HepG2 (cell line): ENCODE measurements at regions of chr19 and their contacts with region 1.

Region 1: GRCh38 chr19:11380653-11381534 is 3.2 kb downstream of the EPOR start:
- DNase-seq: peak; percentile 98
- ATAC-seq: peak; percentile 82
- H3K4me3 ChIP-seq: peak overlapping the region; percentile 40 to 71 (median 63)
- H3K27ac ChIP-seq: peak overlapping the region; percentile 52
- H3K4me1 ChIP-seq: peaks cover 49% of the 10 kb centered on the region
- H3K27me3 ChIP-seq: no peaks in the 10 kb centered on the region
- CTCF ChIP-seq: peak; percentile 95
- EP300 ChIP-seq: no peak; a peak in 1 of 4 replicates
- POLR2A ChIP-seq: peak; percentile 63 to 85
- RAD21 ChIP-seq: peak; percentile 94

Region 2: DNA sequence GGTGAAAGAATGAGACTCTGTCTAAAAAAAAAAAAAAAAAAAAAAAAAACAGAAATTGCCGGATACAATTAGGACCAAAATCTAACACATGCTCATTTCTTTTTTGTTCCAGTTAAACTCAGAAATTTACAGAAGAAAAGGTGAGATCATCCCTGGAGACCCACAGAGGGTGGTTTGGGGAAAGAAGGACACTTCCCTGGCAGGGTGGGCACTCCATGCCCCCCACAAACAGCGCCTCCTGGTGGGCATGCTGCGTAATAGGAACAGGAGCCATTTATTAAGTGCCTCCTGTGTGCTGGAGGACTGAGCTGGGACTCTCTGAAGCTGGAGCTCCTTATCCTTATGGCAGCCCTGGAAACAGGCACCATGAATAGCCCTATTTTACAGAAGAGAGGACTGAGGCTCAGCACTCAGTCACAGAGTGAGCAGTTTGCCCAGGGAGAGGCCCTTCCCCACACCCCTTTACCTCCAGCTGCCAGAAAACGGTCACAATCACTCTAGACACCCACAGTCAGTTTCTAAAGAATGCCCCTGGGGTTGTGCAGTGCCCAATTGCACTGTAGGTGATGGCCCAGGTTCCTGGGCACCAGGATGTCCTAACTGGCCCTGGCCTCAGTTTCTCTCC is 522.6 kb before region 1 on chr19:
- CTCF ChIA-PET with region 1: no interaction called
- POLR2A ChIA-PET with region 1: no interaction called
- in situ Hi-C with region 1: no loop called
- intact Hi-C with region 1: no loop called
- DNase-seq: no peak
- ATAC-seq: peak; percentile 22; the same call in 1 of the 3 replicates
- H3K4me3 ChIP-seq: no peak overlapping the region
- H3K27ac ChIP-seq: no peak overlapping the region
- H3K4me1 ChIP-seq: peaks cover 30% of the 10 kb centered on the region
- H3K27me3 ChIP-seq: no peaks in the 10 kb centered on the region
- CTCF ChIP-seq: peak; percentile 75
- EP300 ChIP-seq: no peak
- POLR2A ChIP-seq: no peak
- RAD21 ChIP-seq: no peak

Region 3: DNA sequence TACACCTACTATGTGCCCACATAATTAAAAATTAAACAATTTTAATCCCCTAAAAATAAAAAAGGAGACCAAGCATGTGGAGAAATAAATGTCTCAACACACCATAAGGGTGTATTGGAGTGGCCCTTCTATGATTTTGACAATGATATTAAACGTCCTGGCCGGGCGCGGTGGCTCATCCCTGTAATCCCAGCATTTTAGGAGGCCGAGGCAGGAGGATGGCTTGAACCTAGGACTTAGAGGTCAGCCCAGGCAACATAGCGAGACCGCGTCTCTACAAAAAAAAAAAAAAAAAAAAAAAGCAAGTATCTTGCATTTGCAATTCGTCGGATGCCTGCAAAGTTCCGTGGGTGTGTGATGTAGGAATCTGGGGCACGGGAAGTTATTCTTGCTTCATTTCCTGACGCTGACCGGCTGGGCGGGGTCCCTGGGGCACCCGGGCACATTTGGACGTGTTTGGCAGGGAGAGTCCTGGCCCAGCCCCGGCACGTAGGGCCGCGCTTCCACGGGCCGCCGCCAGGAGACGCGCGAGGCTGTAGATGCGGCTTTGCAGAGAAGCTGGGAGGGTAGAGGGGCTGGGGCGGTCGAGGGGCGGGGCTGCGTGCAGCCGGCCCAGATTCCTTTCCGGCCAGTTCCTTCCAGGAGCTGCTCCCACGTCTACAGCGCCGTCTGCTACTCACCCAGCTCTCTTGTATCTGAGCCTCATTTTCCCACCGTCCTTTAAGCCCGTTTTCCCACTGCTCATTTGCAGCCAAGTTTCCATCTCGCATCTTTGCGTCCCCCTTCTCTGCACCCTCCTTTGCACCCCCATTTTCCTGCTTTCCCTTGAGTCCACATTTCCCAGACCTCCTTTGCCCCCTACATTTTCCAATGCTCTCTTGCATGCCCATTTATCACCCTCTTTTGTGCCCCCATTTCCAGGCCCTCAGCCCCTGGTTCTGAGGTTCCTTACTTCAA is 87.2 kb before region 1 on chr19:
- CTCF ChIA-PET with region 1: interaction called, 8 read pairs
- POLR2A ChIA-PET with region 1: interaction called, 3 read pairs
- in situ Hi-C with region 1: no loop called
- intact Hi-C with region 1: loop called (anchors 2 kb)
- DNase-seq: peak; percentile 78
- ATAC-seq: peak; percentile 96
- H3K4me3 ChIP-seq: peak overlapping the region in 1 of 3 experiments; percentile 56; a peak in 2 of 6 replicates
- H3K27ac ChIP-seq: no peak overlapping the region
- H3K4me1 ChIP-seq: peaks cover 43% of the 10 kb centered on the region
- H3K27me3 ChIP-seq: peaks cover 3 to 13% of the 10 kb centered on the region in 2 experiments; a peak in 4 of 5 replicates
- CTCF ChIP-seq: peak; percentile 98
- EP300 ChIP-seq: 0 out of 4 replicates have a peak, but pooled peaks of 1 of the 2 experiments have one; percentile 3
- POLR2A ChIP-seq: no peak
- RAD21 ChIP-seq: peak; percentile 96

Region 4: GRCh38 chr19:11422163-11423021 is 41.5 kb after region 1 on chr19:
- CTCF ChIA-PET with region 1: no interaction called
- POLR2A ChIA-PET with region 1: interaction called, 9 read pairs
- in situ Hi-C with region 1: loop called (anchors 5 kb)
- intact Hi-C with region 1: loop called (anchors 5 kb)
- DNase-seq: no peak
- ATAC-seq: no peak
- H3K4me3 ChIP-seq: peak overlapping the region in 2 of 3 experiments; percentile 24 to 69; a peak in 2 of 6 replicates
- H3K27ac ChIP-seq: no peak overlapping the region
- H3K4me1 ChIP-seq: peaks cover 51% of the 10 kb centered on the region
- H3K27me3 ChIP-seq: peaks cover 3 to 35% of the 10 kb centered on the region in 2 experiments; a peak in 4 of 5 replicates
- CTCF ChIP-seq: no peak
- EP300 ChIP-seq: no peak
- POLR2A ChIP-seq: no peak
- RAD21 ChIP-seq: no peak

Region 5: GRCh38 chr19:11435058-11435832 is 54.4 kb after region 1 on chr19 and contains the starts of genes ODAD3 and PRKCSH:
- CTCF ChIA-PET with region 1: interaction called, 9 read pairs
- POLR2A ChIA-PET with region 1: interaction called, 40 read pairs
- in situ Hi-C with region 1: no loop called
- intact Hi-C with region 1: loop called (anchors 1 kb)
- DNase-seq: peak; percentile 99
- ATAC-seq: peak; percentile 96
- H3K4me3 ChIP-seq: peak within 1 kb of the TSS; percentile 78 to 88 (median 81)
- H3K27ac ChIP-seq: peak within 1 kb of the TSS; percentile 71
- H3K4me1 ChIP-seq: peaks cover 20% of the 10 kb centered on the region
- H3K27me3 ChIP-seq: no peaks in the 10 kb centered on the region
- CTCF ChIP-seq: peak; percentile 87
- EP300 ChIP-seq: peak; percentile 18 to 20; a peak in 1 of 4 replicates
- POLR2A ChIP-seq: peak; percentile 86 to 88
- RAD21 ChIP-seq: 0 out of 2 replicates have a peak, but pooled peaks have one; percentile 19
- total RNA-seq, gene ODAD3: 0.04 TPM in 1 of 2 replicates, not detected in the other
- total RNA-seq, gene PRKCSH: 44.2 and 125 TPM in 2 replicates

Region 6: GRCh38 chr19:11446652-11447301 is 65.9 kb after region 1 on chr19:
- CTCF ChIA-PET with region 1: interaction called, 10 read pairs
- POLR2A ChIA-PET with region 1: interaction called, 3 read pairs
- in situ Hi-C with region 1: no loop called
- intact Hi-C with region 1: loop called (anchors 2 kb)
- DNase-seq: no peak
- ATAC-seq: peak; percentile 86
- H3K4me3 ChIP-seq: no peak overlapping the region
- H3K27ac ChIP-seq: no peak overlapping the region
- H3K4me1 ChIP-seq: no peaks in the 10 kb centered on the region
- H3K27me3 ChIP-seq: no peaks in the 10 kb centered on the region
- CTCF ChIP-seq: peak; percentile 90
- EP300 ChIP-seq: no peak
- POLR2A ChIP-seq: no peak
- RAD21 ChIP-seq: peak; percentile 91

Region 7: DNA sequence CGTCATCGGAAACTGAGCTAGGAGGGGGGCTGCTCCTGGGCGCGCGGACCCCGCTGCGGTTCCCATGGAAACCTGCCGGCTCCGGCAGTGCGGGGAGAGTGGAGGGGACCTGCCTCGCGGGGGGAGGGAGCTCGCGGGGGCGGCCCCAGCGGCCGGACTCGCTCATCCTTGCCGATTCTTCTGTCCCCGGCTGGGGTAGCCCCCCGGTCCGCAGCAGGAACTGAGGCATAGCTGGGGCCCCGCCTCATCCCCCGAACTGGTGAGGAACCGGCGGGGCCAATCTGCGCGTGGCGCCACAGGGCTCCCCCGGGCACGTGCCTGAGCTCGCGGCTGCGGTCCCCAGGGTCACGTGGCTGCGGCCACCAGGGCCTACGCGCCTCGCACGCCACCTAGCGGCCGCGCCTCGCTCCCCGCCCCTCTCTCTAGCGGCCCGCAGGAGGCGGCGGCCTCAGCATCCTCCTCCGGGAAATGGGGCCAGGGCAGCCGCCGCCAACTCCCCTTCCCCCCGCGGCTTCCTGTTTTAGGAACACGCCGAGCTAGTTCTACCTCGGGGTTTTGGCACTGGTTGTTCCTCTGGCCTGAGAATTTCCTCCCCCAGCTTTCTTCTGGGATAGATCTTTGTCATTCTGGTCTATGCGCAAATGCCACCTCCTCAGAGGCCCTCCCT is 101.6 kb after region 1 on chr19:
- CTCF ChIA-PET with region 1: interaction called, 10 read pairs
- POLR2A ChIA-PET with region 1: interaction called, 6 read pairs
- in situ Hi-C with region 1: loop called (anchors 5 kb)
- intact Hi-C with region 1: loop called (anchors 1 kb)
- DNase-seq: peak; percentile 45
- ATAC-seq: peak; percentile 76
- H3K4me3 ChIP-seq: peak overlapping the region in 1 of 3 experiments; percentile 41; a peak in 1 of 6 replicates
- H3K27ac ChIP-seq: no peak overlapping the region
- H3K4me1 ChIP-seq: peaks cover 17% of the 10 kb centered on the region
- H3K27me3 ChIP-seq: peaks cover 5 to 32% of the 10 kb centered on the region in 2 experiments; a peak in 4 of 5 replicates
- CTCF ChIP-seq: peak; percentile 94
- EP300 ChIP-seq: no peak
- POLR2A ChIP-seq: no peak
- RAD21 ChIP-seq: peak; percentile 96